ENCODE measurements at regions of chr2 and their contacts with region 1.

Region 1: DNA sequence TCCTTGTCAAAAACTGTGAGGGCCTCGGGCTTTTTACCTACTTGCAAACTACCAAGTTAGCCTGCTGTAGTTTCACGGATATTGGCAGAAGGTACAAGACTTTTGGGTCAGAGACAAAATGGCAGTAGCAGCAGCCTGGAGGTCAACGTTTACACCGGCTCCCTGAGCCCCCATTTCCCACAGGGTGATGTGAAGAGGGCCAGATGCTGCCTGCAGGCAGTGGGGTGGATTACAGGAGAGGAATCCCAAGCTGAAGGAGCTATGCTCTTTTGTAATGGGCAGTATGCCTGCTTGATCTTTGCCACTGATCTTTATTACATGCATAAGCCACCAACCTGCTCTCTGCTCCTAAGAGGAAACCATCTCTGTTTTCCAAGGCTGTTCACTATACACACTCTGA is 29.5 kb upstream of the SP5 start:
- DNase-seq: no peak
- H3K4me3 ChIP-seq: no peak overlapping the region
- H3K27ac ChIP-seq: no peak overlapping the region
- H3K4me1 ChIP-seq: no peaks in the 10 kb centered on the region
- H3K27me3 ChIP-seq: no peaks in the 10 kb centered on the region
- CTCF ChIP-seq: no peak
- POLR2A ChIP-seq: no peak

Region 2: GRCh38 chr2:170191166-170191866 is 494.3 kb before region 1 on chr2:
- intact Hi-C with region 1: loop called (anchors 5 kb)
- DNase-seq: no peak
- H3K4me3 ChIP-seq: no peak overlapping the region
- H3K27ac ChIP-seq: no peak overlapping the region
- H3K4me1 ChIP-seq: no peaks in the 10 kb centered on the region
- H3K27me3 ChIP-seq: no peaks in the 10 kb centered on the region
- CTCF ChIP-seq: no peak
- POLR2A ChIP-seq: no peak

Region 3: GRCh38 chr2:170639635-170640034 is 46.0 kb before region 1 on chr2:
- intact Hi-C with region 1: no loop called
- DNase-seq: no peak
- H3K4me3 ChIP-seq: no peak overlapping the region
- H3K27ac ChIP-seq: no peak overlapping the region
- H3K4me1 ChIP-seq: no peaks in the 10 kb centered on the region
- H3K27me3 ChIP-seq: no peaks in the 10 kb centered on the region
- CTCF ChIP-seq: no peak
- POLR2A ChIP-seq: no peak

Region 4: DNA sequence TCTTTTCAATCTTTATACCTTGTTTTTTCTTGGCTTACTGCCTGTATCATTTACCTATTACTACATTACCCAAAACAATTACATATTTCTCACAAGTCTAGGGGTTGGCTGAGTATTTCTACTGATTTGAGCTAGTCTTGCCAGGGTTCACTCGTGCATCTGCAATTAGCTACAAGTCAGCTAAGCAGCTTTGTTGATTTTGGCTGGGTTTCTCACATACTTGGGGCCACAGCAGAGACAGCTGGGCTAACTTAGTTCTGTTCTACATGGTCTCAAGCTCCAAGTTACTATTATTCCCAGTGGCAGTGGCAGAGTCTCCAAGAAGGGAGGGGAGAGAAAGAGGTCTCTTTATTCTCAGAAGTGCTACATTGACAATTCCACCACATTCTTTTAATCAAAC is 25.2 kb before region 1 on chr2:
- intact Hi-C with region 1: no loop called
- DNase-seq: no peak
- H3K4me3 ChIP-seq: no peak overlapping the region
- H3K27ac ChIP-seq: no peak overlapping the region
- H3K4me1 ChIP-seq: no peaks in the 10 kb centered on the region
- H3K27me3 ChIP-seq: no peaks in the 10 kb centered on the region
- CTCF ChIP-seq: no peak
- POLR2A ChIP-seq: no peak